ENCODE measurements at regions of chr16 and their contacts with region 1.

Region 1: GRCh38 chr16:12067714-12068401 is 91.3 kb downstream of the SNX29 start:
- DNase-seq: peak; percentile 70
- H3K4me3 Mint-ChIP-seq: no peak overlapping the region
- H3K27ac Mint-ChIP-seq: no peak overlapping the region
- H3K4me1 Mint-ChIP-seq: no peaks in the 10 kb centered on the region
- H3K27me3 Mint-ChIP-seq: no peaks in the 10 kb centered on the region
- CTCF ChIP-seq: peak; percentile 96

Region 2: DNA sequence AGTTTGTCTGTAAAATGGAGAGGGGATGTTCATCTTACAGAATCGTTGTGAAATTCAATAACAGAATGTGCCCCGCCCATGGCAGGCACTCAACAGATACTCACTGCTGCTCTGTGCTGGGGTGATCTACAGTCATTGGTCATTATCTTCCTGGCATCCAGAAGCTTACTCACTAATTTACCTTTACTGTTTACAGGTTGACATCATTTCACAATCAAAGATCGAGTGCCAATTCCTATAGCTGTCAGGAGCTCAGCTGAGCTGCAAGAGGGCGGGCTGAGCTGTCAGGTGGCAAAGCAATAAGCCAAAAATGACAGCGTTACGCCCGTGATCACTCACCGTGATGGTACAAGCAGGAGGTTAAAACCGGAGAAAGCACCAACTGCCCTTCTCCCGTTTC is 532.4 kb before region 1 on chr16:
- CTCF ChIA-PET with region 1: no interaction called
- intact Hi-C with region 1: no loop called
- DNase-seq: peak; percentile 30
- H3K4me3 Mint-ChIP-seq: no peak overlapping the region
- H3K27ac Mint-ChIP-seq: peak overlapping the region; percentile 50
- H3K4me1 Mint-ChIP-seq: peaks cover 42% of the 10 kb centered on the region
- H3K27me3 Mint-ChIP-seq: no peaks in the 10 kb centered on the region
- CTCF ChIP-seq: no peak

Region 3: GRCh38 chr16:11949527-11949926 is 118.3 kb before region 1 on chr16:
- CTCF ChIA-PET with region 1: interaction called, 18 read pairs
- intact Hi-C with region 1: loop called (anchors 1 kb)
- DNase-seq: peak; percentile 59
- H3K4me3 Mint-ChIP-seq: no peak overlapping the region
- H3K27ac Mint-ChIP-seq: no peak overlapping the region
- H3K4me1 Mint-ChIP-seq: no peaks in the 10 kb centered on the region
- H3K27me3 Mint-ChIP-seq: no peaks in the 10 kb centered on the region
- CTCF ChIP-seq: peak; percentile 66

Region 4: DNA sequence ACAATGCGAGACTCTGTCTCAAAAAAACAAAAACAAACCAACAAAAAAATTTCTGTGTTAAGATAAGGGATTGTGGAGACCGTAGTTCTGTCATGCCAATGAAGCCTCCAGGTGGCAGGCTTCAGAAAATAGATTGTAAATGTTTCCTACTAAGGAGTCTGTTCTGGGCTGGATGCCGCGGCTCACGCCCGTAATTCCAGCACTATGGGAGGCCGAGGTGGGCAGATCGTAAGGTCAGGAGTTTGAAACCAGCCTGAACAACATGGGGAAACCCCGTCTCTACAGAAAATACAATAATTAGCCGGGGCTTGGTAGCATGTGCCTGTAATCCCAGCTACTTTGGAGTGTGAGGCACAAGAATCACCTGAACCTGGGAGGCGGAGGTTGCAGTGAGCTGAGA is 95.7 kb before region 1 on chr16:
- CTCF ChIA-PET with region 1: interaction called, 18 read pairs
- intact Hi-C with region 1: loop called (anchors 2 kb)
- DNase-seq: peak; percentile 38
- H3K4me3 Mint-ChIP-seq: no peak overlapping the region
- H3K27ac Mint-ChIP-seq: no peak overlapping the region
- H3K4me1 Mint-ChIP-seq: peaks cover 15% of the 10 kb centered on the region
- H3K27me3 Mint-ChIP-seq: no peaks in the 10 kb centered on the region
- CTCF ChIP-seq: peak; percentile 52

Region 5: GRCh38 chr16:12024449-12024848 is 43.4 kb before region 1 on chr16:
- CTCF ChIA-PET with region 1: interaction called, 13 read pairs
- intact Hi-C with region 1: no loop called
- DNase-seq: peak; percentile 75
- H3K4me3 Mint-ChIP-seq: peak overlapping the region; percentile 6
- H3K27ac Mint-ChIP-seq: peak overlapping the region; percentile 8
- H3K4me1 Mint-ChIP-seq: peaks cover 45% of the 10 kb centered on the region
- H3K27me3 Mint-ChIP-seq: no peaks in the 10 kb centered on the region
- CTCF ChIP-seq: no peak